ENCODE measurements at regions of chr14 and their contacts with region 1.

Region 1: DNA sequence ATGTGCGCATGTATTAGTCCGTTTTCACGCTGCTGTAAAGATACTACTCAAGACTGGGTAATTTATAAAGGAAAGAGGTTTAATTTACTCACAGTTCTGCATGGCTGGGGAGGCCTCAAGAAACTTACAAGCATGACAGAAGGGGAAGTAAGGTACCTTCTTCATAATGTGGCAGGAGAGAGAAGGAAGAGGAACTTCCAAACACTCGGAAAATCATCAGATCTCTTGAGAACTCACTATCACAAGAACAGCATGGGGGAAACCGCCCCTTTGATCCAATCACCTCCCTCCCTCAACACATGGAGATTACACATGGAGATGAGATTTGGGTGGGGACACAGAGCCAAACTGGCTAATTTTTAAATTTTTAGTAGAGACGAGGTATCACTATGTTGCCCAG is 41.8 kb upstream of the SNX6 start:
- DNase-seq: no peak
- ATAC-seq: no peak
- H3K4me3 ChIP-seq: no peak overlapping the region
- H3K27ac ChIP-seq: no peak overlapping the region
- H3K4me1 ChIP-seq: peaks cover 0 to 13% (median 0%) of the 10 kb centered on the region in 9 donors
- H3K27me3 ChIP-seq: no peaks in the 10 kb centered on the region
- CTCF ChIP-seq: no peak

Region 2: DNA sequence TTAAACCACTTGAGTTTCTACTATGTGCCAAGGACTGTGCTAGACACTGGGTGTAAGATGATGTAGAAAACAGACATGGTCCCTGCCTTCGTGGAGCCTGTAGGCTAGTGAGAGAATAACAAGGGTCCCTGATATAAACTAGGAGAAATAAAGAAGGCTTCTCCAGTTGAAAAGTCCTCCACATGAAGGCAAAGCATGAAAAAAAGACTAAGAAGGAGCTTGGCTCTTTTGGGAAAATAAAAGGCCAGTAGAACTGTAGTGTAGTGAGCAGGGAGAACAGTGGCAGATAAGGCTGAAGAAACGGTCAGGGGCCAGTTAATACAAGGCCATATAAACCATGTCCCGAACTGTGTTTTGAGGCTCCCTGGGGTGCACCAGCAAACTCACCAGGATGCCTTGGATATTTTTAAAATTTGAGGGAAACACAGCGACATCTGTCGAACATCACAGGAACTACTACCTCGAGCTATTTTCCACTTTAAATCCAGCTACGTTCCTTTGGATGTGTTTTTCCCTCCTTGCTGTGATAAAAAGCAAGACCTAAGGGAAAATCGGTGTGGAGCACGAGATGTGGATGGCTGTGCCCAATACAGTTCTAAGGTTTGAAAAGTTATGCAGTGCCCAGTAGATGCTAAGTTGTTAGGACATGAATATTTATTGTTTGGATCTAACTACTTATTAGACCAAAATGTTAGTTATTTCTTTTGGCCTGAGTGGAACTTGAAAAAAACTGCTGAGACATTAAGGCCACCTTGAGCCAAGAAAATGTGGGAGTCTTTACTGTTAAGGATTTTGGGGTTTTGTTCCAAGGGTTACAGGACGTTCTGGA is 51.2 kb after region 1 on chr14:
- intact Hi-C with region 1: loop called (anchors 1 to 5 kb)
- DNase-seq: peak in 1 of 2 donors; percentile 38
- ATAC-seq: peak in 7 of 8 donors; percentile 17 to 72 (median 51)
- H3K4me3 ChIP-seq: no peak overlapping the region
- H3K27ac ChIP-seq: no peak overlapping the region
- H3K4me1 ChIP-seq: peaks cover 0 to 9% (median 0%) of the 10 kb centered on the region in 9 donors
- H3K27me3 ChIP-seq: no peaks in the 10 kb centered on the region
- CTCF ChIP-seq: peak; percentile 77 to 87 (median 84)

Region 3: GRCh38 chr14:35423621-35424020 is 751.9 kb after region 1 on chr14:
- intact Hi-C with region 1: loop called in 2 of 10 experiments (anchors 2 to 5 kb)
- DNase-seq: no peak
- ATAC-seq: no peak
- H3K4me3 ChIP-seq: no peak overlapping the region
- H3K27ac ChIP-seq: no peak overlapping the region
- H3K4me1 ChIP-seq: peaks cover 0 to 14% (median 0%) of the 10 kb centered on the region in 9 donors
- H3K27me3 ChIP-seq: no peaks in the 10 kb centered on the region
- CTCF ChIP-seq: no peak